T-cell (primary cell): ENCODE measurements at regions of chr13 and their contacts with region 1.

Region 1: DNA sequence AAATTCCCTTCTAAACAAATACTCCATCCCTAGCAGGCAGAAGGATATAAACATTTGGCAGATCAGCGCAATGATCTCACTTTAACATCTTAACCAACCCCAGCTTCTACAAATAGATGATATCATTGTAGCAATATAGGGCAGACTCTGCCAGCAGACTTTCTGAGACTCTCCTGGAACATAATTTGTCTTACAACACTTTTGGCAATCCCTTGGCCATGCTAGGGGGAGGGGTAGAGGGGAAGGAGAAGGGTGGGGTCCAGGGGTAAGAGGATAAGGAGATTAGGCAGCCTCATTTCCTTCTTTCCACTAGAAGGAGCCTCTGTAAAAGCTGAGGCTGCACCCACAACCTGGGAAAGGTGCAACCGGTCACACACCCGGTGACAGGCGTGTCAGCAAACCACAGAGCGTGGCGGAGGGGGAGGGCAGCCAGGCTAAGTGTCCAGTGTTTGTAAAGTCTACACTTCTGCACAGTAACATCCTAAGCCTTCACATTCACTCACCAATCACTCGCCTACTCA is 8.7 kb upstream of the UBAC2 start:
- DNase-seq: no peak
- ATAC-seq: no peak
- H3K4me3 ChIP-seq: no peak overlapping the region
- H3K4me3 Mint-ChIP-seq: no peak overlapping the region
- H3K27ac ChIP-seq: no peak overlapping the region
- H3K27ac Mint-ChIP-seq: peak overlapping the region; percentile 34 to 55
- H3K4me1 ChIP-seq: peaks cover 13 to 14% of the 10 kb centered on the region in 2 experiments
- H3K4me1 Mint-ChIP-seq: peaks cover 21 to 31% (median 21%) of the 10 kb centered on the region in 3 donors
- H3K27me3 ChIP-seq: no peaks in the 10 kb centered on the region
- H3K27me3 Mint-ChIP-seq: no peaks in the 10 kb centered on the region

Region 2: DNA sequence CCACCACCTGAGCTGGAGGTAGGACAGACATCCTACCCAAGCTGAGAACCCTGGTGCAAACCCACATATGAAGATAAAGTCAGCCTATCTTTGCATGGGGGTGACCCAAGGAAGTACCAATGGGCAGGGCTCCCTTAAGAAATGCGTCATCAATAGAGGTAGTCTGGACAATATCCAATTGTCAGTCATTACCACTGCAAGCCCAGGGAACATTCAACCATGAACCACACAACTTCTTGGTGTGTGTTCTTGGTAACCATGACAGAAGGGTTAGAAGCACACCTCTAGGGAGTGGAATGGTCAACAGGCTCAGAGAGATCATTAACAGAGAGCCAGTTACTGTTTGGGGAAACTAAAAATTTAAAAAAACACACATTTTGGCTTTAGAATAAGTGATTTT is 179.4 kb before region 1 on chr13:
- CTCF ChIA-PET with region 1: no interaction called
- POLR2A ChIA-PET with region 1: interaction called in 1 of 2 experiments, 15 read pairs
- DNase-seq: no peak
- ATAC-seq: no peak
- H3K4me3 ChIP-seq: no peak overlapping the region
- H3K4me3 Mint-ChIP-seq: no peak overlapping the region
- H3K27ac ChIP-seq: no peak overlapping the region
- H3K27ac Mint-ChIP-seq: no peak overlapping the region
- H3K4me1 ChIP-seq: peaks cover 11 to 32% of the 10 kb centered on the region in 2 experiments
- H3K4me1 Mint-ChIP-seq: peaks cover 73 to 81% (median 76%) of the 10 kb centered on the region in 3 donors
- H3K27me3 ChIP-seq: no peaks in the 10 kb centered on the region
- H3K27me3 Mint-ChIP-seq: no peaks in the 10 kb centered on the region

Region 3: DNA sequence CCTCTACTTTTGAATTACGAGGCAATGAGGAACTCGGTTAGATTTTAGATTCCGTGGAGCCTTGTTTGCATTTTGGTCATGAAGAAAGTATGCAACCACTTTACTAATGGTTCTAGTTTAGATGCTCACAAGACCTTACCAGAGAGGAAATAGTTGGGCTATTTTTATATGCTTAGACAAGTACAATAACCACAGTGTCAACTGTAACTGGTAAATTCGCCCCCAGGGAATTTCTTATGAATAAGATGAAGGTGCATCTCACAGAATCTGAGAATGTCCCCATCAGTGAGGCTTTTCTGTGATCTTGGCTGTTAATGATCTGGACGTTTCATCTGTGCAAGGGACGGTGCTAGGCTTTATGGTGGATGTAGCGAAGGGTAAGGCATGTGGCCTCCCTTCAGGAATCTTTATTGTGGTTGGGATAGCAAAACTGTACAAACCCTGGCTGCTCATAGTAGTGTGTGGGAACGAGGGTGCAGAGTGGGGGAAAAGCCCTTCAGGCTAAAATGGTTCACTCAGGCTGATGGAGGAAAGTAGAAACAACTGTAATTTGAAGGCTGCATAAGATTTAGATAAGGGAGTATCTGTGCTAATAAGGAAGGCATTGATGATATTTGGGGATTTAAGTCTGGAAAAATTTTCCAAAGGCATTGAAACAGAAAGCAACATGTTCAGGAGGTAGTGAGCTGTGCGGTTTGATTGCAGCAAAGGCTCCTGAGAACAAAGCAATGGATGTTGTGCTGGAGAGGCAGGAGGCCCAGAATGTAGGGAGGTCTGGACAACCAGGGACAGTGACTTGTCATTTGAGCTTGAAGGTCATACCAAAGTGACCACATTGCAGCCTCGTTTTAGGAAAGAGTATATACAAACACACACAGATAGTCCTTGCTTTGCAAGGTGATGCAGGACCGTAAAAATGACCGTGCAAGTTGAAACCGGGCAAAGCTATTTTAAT is 37.1 kb after region 1 on chr13:
- CTCF ChIA-PET with region 1: no interaction called
- POLR2A ChIA-PET with region 1: interaction called in 1 of 2 experiments, 13 read pairs
- DNase-seq: peak in 1 of 35 experiments; percentile 60
- ATAC-seq: peak; percentile 39 to 74 (median 47)
- H3K4me3 ChIP-seq: peak overlapping the region; percentile 11 to 39
- H3K4me3 Mint-ChIP-seq: peak overlapping the region; percentile 51 to 75 (median 74)
- H3K27ac ChIP-seq: peak overlapping the region; percentile 74
- H3K27ac Mint-ChIP-seq: peak overlapping the region; percentile 88 to 94
- H3K4me1 ChIP-seq: peaks cover 47 to 66% of the 10 kb centered on the region in 2 experiments
- H3K4me1 Mint-ChIP-seq: peaks cover 71 to 82% (median 79%) of the 10 kb centered on the region in 3 donors
- H3K27me3 ChIP-seq: no peaks in the 10 kb centered on the region
- H3K27me3 Mint-ChIP-seq: no peaks in the 10 kb centered on the region

Region 4: GRCh38 chr13:100361504-100361903 is 1169.6 kb after region 1 on chr13:
- CTCF ChIA-PET with region 1: no interaction called
- POLR2A ChIA-PET with region 1: no interaction called
- DNase-seq: no peak
- ATAC-seq: no peak
- H3K4me3 ChIP-seq: no peak overlapping the region
- H3K4me3 Mint-ChIP-seq: no peak overlapping the region
- H3K27ac ChIP-seq: no peak overlapping the region
- H3K27ac Mint-ChIP-seq: no peak overlapping the region
- H3K4me1 ChIP-seq: no peaks in the 10 kb centered on the region
- H3K4me1 Mint-ChIP-seq: no peaks in the 10 kb centered on the region
- H3K27me3 ChIP-seq: no peaks in the 10 kb centered on the region
- H3K27me3 Mint-ChIP-seq: no peaks in the 10 kb centered on the region